ENCODE measurements at regions of chr3 and their contacts with region 1.

Region 1: GRCh38 chr3:167882067-167882667 is 146.6 kb downstream of the SERPINI1 start:
- DNase-seq: peak; percentile 77
- H3K4me3 ChIP-seq: no peak overlapping the region
- H3K27ac ChIP-seq: no peak overlapping the region
- H3K4me1 ChIP-seq: peaks cover 1% of the 10 kb centered on the region; the same call in 1 of the 2 replicates
- H3K27me3 ChIP-seq: peaks cover 7% of the 10 kb centered on the region; the same call in 1 of the 2 replicates

Region 2: DNA sequence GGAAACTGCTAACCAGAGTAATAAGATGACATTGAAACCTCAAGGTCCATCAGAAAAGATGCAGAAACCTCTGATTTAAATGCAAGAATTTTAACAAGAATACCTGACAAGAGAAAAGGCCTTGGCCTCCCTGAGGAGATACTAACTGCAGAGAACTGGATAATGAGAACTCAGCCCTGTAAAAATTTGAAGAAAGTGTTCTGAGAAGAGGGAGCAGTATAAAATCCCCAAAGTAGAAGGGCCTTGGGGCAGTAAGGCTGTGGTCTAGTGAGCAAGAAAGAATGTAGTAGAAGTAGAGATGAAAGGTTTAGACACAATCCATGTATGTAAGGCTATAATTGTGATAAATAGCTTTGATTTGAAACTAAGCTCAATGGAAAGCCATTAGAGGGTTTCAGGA is 896.2 kb before region 1 on chr3:
- in situ Hi-C with region 1: no loop called
- DNase-seq: no peak
- H3K4me3 ChIP-seq: no peak overlapping the region
- H3K27ac ChIP-seq: no peak overlapping the region
- H3K4me1 ChIP-seq: no peaks in the 10 kb centered on the region
- H3K27me3 ChIP-seq: no peaks in the 10 kb centered on the region

Region 3: GRCh38 chr3:167406875-167407492 is 475.2 kb before region 1 on chr3:
- in situ Hi-C with region 1: loop called (anchors 25 kb)
- DNase-seq: peak; percentile 84
- H3K4me3 ChIP-seq: no peak overlapping the region
- H3K27ac ChIP-seq: no peak overlapping the region
- H3K4me1 ChIP-seq: no peaks in the 10 kb centered on the region
- H3K27me3 ChIP-seq: no peaks in the 10 kb centered on the region

Region 4: GRCh38 chr3:168006584-168006983 is 124.4 kb after region 1 on chr3:
- in situ Hi-C with region 1: no loop called
- DNase-seq: no peak
- H3K4me3 ChIP-seq: no peak overlapping the region
- H3K27ac ChIP-seq: no peak overlapping the region
- H3K4me1 ChIP-seq: no peaks in the 10 kb centered on the region
- H3K27me3 ChIP-seq: no peaks in the 10 kb centered on the region

Region 5: GRCh38 chr3:168213920-168214319 is 331.8 kb after region 1 on chr3:
- in situ Hi-C with region 1: no loop called
- DNase-seq: peak; percentile 9
- H3K4me3 ChIP-seq: no peak overlapping the region
- H3K27ac ChIP-seq: no peak overlapping the region
- H3K4me1 ChIP-seq: no peaks in the 10 kb centered on the region
- H3K27me3 ChIP-seq: no peaks in the 10 kb centered on the region; the same call in 1 of the 2 replicates